Naive thymus-derived CD4-positive, alpha-beta T cell (primary cell): ENCODE measurements at regions of chr7 and their contacts with region 1.

Region 1: DNA sequence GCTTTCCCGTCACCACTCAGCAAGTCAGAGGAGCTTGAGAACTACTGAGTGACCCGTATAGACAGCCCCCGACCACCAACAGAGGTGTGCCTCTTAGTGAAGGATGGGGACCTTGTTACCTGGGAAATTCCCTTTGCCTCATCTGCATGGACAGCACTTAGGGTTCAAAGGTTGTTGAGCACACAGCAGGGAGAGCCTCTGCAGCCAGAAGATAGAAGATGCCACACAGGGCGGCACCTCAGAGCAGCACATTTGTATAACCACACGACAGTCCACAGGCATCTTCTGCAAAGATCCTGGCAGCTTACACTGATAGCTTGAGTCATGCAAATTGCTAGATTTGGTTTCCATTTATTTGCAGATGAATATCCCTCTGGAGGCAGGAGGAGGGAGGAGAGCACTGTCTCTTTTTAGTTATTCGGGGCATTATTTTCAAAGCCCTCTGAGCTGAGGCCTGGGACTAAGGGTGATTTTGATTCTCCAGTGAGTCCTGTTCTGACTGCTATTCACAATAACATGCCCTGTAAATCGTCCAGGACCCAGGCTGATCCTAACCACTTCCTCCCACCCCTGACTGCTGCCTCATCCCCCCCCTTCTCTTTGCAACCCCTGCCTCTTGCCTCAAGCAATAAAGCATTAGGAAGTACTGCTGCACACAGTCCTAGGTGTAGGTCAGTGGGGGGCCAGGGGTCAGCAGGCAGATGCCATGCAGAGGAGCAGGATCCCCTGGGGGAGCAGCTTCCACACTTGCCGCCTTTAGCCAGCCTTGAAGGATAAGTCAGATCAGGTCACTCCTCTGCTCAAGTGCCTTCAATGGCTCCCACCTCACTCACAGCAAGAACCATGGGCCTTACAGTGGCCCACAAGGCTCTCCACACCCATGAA is 24.6 kb upstream of the INMT start:
- DNase-seq: peak in 8 of 9 donors; percentile 30 to 86 (median 81)
- ATAC-seq: peak; percentile 93
- H3K4me3 ChIP-seq: peak overlapping the region; percentile 86
- H3K4me3 Mint-ChIP-seq: peak overlapping the region; percentile 76 to 91 (median 90)
- H3K27ac ChIP-seq: peak overlapping the region; percentile 67
- H3K27ac Mint-ChIP-seq: peak overlapping the region; percentile 86 to 96 (median 91)
- H3K4me1 ChIP-seq: peaks cover 24 to 52% of the 10 kb centered on the region in 2 donors
- H3K4me1 Mint-ChIP-seq: peaks cover 46 to 79% (median 77%) of the 10 kb centered on the region in 7 donors
- H3K27me3 ChIP-seq: no peaks in the 10 kb centered on the region
- H3K27me3 Mint-ChIP-seq: no peaks in the 10 kb centered on the region

Region 2: DNA sequence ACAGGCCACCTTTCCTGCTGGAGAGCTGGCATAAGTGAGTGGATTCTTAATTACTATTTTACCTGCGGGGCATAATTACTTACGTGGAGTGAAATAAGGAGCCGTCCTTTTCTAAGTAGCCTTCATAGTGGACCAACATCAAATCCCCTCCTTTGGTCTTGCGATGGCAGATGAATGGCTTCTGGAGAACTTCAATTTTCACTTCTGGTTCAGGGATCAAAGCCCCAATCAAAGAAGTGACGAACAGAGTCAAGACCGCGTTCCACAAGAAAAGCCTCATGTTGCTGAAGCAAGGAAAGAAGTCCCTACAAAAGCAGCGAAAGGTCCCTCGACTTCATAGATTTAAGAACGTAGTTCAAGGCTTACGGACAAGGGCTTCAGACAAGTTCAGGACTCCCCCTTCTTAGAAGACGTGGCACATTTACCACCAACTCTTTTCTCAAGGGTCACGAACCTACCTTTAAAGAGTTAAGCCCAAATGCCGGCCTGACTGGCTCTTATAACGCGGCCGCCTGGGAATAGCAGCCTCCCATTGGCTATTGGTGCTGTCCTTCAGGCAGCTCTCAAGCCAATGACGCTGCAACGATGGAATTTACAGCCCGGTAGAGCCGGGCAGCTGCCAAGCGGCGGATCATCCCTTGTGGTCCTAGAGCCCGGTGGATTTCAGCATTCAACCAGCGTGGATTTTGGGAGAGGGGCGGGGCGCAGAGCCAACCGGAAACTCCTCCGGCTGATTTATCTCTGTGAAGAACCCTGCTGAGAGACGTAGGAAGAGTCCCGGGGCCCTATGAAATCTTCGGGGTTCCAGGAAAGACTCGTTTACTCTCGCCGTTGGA is 700.9 kb before region 1 on chr7 and contains the start of gene FKBP14:
- CTCF ChIA-PET with region 1: no interaction called
- POLR2A ChIA-PET with region 1: no interaction called
- intact Hi-C with region 1: loop called in 1 of 2 experiments (anchors 5 kb)
- DNase-seq: peak; percentile 70 to 93 (median 89)
- ATAC-seq: peak; percentile 91
- H3K4me3 ChIP-seq: peak within 1 kb of the TSS; percentile 79
- H3K4me3 Mint-ChIP-seq: peak within 1 kb of the TSS in 6 of 10 donors; percentile 85 to 98 (median 89)
- H3K27ac ChIP-seq: peak within 1 kb of the TSS; percentile 69
- H3K27ac Mint-ChIP-seq: peak within 1 kb of the TSS; percentile 74 to 94 (median 88)
- H3K4me1 ChIP-seq: peaks cover 6 to 20% of the 10 kb centered on the region in 2 donors
- H3K4me1 Mint-ChIP-seq: peaks cover 28 to 47% (median 40%) of the 10 kb centered on the region in 7 donors
- H3K27me3 ChIP-seq: no peaks in the 10 kb centered on the region
- H3K27me3 Mint-ChIP-seq: no peaks in the 10 kb centered on the region
- total RNA-seq, gene FKBP14: 4.0 to 6.5 (median 5.3) TPM

Region 3: GRCh38 chr7:30504347-30505173 is 222.7 kb before region 1 on chr7 and contains the start of gene GGCT:
- CTCF ChIA-PET with region 1: no interaction called
- POLR2A ChIA-PET with region 1: no interaction called
- intact Hi-C with region 1: loop called in 1 of 2 experiments (anchors 1 kb)
- DNase-seq: peak; percentile 88 to 97 (median 95)
- ATAC-seq: peak; percentile 99
- H3K4me3 ChIP-seq: peak within 1 kb of the TSS; percentile 91
- H3K4me3 Mint-ChIP-seq: peak within 1 kb of the TSS; percentile 90 to 96 (median 95)
- H3K27ac ChIP-seq: peak within 1 kb of the TSS; percentile 72
- H3K27ac Mint-ChIP-seq: peak within 1 kb of the TSS; percentile 87 to 99 (median 91)
- H3K4me1 ChIP-seq: peaks cover 12% of the 10 kb centered on the region in 2 donors
- H3K4me1 Mint-ChIP-seq: peaks cover 19 to 51% (median 44%) of the 10 kb centered on the region in 7 donors
- H3K27me3 ChIP-seq: no peaks in the 10 kb centered on the region
- H3K27me3 Mint-ChIP-seq: no peaks in the 10 kb centered on the region
- total RNA-seq, gene GGCT: 9.5 to 39.2 (median 10.8) TPM

Region 4: GRCh38 chr7:30682212-30683083 is 44.9 kb before region 1 on chr7 and contains the start of gene CRHR2:
- CTCF ChIA-PET with region 1: interaction called, 4 read pairs
- POLR2A ChIA-PET with region 1: no interaction called
- intact Hi-C with region 1: loop called in 1 of 2 experiments (anchors 1 kb)
- DNase-seq: peak in 8 of 9 donors; percentile 13 to 40 (median 33)
- ATAC-seq: peak; percentile 75
- H3K4me3 ChIP-seq: peak within 1 kb of the TSS; percentile 41
- H3K4me3 Mint-ChIP-seq: peak within 1 kb of the TSS; percentile 78 to 87 (median 81)
- H3K27ac ChIP-seq: no peak within 1 kb of the TSS
- H3K27ac Mint-ChIP-seq: peak within 1 kb of the TSS in 1 of 9 donors; percentile 36
- H3K4me1 ChIP-seq: peaks cover 4 to 5% of the 10 kb centered on the region in 2 donors
- H3K4me1 Mint-ChIP-seq: peaks cover 6 to 15% (median 12%) of the 10 kb centered on the region in 7 donors
- H3K27me3 ChIP-seq: peaks cover 0 to 20% of the 10 kb centered on the region in 2 donors
- H3K27me3 Mint-ChIP-seq: peaks cover 51 to 73% (median 64%) of the 10 kb centered on the region in 5 donors
- total RNA-seq, gene CRHR2: not detected

Region 5: DNA sequence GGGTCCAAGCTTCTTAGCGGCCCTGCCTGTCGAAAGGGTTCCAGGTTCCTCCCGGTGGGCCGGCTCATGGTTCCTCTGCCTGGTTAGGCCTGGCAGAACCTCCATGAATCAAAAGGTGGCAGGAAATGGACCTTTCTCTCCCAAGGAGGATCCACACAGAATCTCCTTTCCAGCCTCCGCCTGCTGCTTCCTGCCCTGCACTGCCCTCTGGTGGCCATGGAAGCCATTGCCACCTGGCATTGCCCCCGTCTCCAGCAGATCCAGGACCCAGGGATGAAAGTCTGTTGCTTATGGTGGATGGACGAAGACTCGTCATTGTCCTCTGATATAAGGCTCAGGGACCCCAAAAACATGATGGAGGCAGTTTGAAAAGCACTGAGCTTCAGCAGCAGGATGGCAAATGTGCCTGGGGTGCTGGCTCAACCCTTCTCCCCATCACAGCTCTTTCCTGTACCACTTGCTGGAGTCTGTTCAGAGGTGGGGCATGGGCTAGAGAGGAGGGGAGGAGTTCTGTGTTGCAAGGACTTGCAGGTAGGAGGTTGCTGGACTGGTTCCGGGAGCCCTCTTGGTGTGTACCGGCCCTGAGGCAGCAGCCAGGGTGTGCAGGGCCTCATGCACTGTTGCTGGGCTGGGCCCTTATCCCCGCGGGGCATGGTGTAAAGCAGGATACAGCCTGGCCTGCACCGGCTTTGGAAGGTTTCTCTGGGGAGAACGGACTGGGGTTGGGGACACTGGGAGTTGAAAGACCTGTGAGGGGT is 13.3 kb after region 1 on chr7:
- CTCF ChIA-PET with region 1: interaction called, 158 read pairs
- POLR2A ChIA-PET with region 1: interaction called, 126 read pairs
- intact Hi-C with region 1: loop called (anchors 1 kb)
- DNase-seq: peak; percentile 55 to 85 (median 72)
- ATAC-seq: peak; percentile 74
- H3K4me3 ChIP-seq: no peak overlapping the region
- H3K4me3 Mint-ChIP-seq: peak overlapping the region in 3 of 10 donors; percentile 18 to 42 (median 35)
- H3K27ac ChIP-seq: no peak overlapping the region
- H3K27ac Mint-ChIP-seq: peak overlapping the region in 7 of 9 donors; percentile 47 to 95 (median 73)
- H3K4me1 ChIP-seq: peaks cover 27 to 41% of the 10 kb centered on the region in 2 donors
- H3K4me1 Mint-ChIP-seq: peaks cover 22 to 44% (median 39%) of the 10 kb centered on the region in 7 donors
- H3K27me3 ChIP-seq: no peaks in the 10 kb centered on the region
- H3K27me3 Mint-ChIP-seq: peaks cover 0 to 5% (median 0%) of the 10 kb centered on the region in 5 donors

Region 6: GRCh38 chr7:32495298-32496176 is 1768.2 kb after region 1 on chr7 and contains the start of gene AVL9:
- CTCF ChIA-PET with region 1: no interaction called
- POLR2A ChIA-PET with region 1: no interaction called
- intact Hi-C with region 1: loop called in 1 of 2 experiments (anchors 2 kb)
- DNase-seq: peak; percentile 96 to 99 (median 98)
- ATAC-seq: peak; percentile 98
- H3K4me3 ChIP-seq: peak within 1 kb of the TSS; percentile 88
- H3K4me3 Mint-ChIP-seq: peak within 1 kb of the TSS; percentile 86 to 100 (median 96)
- H3K27ac ChIP-seq: peak within 1 kb of the TSS; percentile 96
- H3K27ac Mint-ChIP-seq: peak within 1 kb of the TSS; percentile 92 to 98 (median 97)
- H3K4me1 ChIP-seq: peaks cover 12 to 25% of the 10 kb centered on the region in 2 donors
- H3K4me1 Mint-ChIP-seq: peaks cover 22 to 50% (median 40%) of the 10 kb centered on the region in 7 donors
- H3K27me3 ChIP-seq: no peaks in the 10 kb centered on the region
- H3K27me3 Mint-ChIP-seq: no peaks in the 10 kb centered on the region
- total RNA-seq, gene AVL9: 30.9 to 57.9 (median 45.3) TPM